A549 (cell line): ENCODE measurements at regions of chr3 and their contacts with region 1.

Region 1: DNA sequence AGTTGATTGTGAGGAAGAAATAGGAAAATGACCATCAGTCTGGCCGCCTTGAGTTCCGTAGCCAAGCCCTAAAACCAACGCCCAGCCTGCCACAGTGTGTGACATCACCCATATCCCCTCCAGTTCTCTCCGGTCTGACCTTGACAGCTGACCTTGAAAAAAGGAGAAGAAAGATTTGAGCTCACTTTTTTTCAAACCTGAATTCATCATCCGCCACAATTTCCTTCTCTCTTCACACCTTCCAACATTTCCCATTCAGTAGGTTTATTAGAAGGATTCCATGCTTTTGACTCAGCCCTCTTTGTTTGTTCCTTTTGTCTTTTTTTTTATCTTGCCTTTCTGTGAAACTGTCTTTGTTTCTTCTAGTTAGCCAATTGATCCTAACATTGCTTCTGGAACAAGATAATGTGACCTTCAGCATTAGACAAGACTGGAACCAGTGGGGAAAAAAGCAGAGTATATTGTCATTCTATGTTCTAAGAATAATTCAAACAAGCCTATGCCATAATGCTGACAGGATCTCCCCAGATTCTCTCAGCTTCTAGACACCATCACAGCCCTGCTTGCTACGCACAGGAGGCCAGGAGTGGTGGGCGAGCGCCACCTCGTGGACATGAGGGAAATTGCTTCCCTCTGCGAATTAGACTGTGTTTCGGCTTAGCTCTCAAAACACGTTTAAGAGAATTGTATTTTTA is 283.1 kb downstream of the FGF12 start:
- DNase-seq: peak; percentile 47 to 53
- ATAC-seq: peak; percentile 83 to 94
- H3K4me3 ChIP-seq: no peak overlapping the region
- H3K27ac ChIP-seq: no peak overlapping the region
- H3K4me1 ChIP-seq: no peaks in the 10 kb centered on the region
- CTCF ChIP-seq: peak; percentile 83
- EP300 ChIP-seq: no peak
- POLR2A ChIP-seq: no peak
- RAD21 ChIP-seq: peak; percentile 92 to 95

Region 2: DNA sequence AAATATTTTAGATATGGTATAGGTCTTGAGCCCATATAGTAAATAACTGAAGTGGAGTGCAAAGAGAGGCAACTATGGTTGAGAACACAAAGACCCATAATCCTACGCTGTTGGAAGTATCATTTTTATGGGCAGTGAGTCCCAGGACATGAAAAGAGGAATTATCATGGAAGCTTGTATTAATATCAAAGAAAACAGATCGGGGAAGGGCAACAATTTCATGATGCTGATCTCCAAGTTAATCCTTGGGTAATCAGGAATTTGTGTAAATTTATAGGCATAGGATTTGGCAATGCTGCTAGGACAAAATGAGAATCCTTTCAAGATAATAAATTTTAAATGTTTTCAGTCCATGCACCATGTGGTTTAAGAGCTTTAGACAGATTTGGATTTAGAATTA is 1023.5 kb before region 1 on chr3:
- CTCF ChIA-PET with region 1: interaction called, 11 read pairs
- POLR2A ChIA-PET with region 1: no interaction called
- DNase-seq: no peak
- ATAC-seq: no peak
- H3K4me3 ChIP-seq: no peak overlapping the region
- H3K27ac ChIP-seq: no peak overlapping the region
- H3K4me1 ChIP-seq: no peaks in the 10 kb centered on the region
- CTCF ChIP-seq: no peak
- EP300 ChIP-seq: no peak
- POLR2A ChIP-seq: no peak
- RAD21 ChIP-seq: no peak

Region 3: DNA sequence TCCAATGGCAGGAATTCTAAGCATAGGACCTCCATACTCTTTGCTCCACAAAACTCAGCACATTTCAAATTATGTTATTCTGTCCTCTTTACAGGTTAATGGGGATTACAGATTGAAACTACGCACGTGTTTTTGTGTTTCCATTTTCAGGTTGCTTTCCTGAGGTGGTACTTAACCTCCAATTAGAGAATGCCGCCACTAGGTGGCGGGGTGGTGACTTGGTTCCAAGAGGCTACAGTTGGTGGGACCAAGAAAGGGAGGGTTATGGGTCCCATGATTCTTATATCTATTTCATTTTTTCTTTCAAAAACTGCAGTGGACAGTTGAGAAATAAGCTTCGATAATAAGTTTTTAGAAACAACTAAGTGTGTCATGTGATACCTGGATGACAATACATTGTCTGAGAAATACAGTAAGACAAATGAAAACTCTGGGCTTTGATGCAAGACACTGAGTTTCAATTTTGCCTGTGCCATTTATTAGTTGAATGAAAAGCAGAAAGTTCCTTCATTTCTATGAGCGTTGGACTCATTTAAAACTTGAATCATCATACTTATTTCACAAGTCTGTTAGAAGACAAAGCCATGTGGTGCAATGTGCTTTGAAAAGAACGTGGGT is 255.9 kb before region 1 on chr3:
- CTCF ChIA-PET with region 1: interaction called, 21 read pairs
- POLR2A ChIA-PET with region 1: no interaction called
- DNase-seq: peak; percentile 21 to 51
- ATAC-seq: peak; percentile 62 to 86; a peak in 5 of 6 replicates
- H3K4me3 ChIP-seq: no peak overlapping the region
- H3K27ac ChIP-seq: no peak overlapping the region
- H3K4me1 ChIP-seq: no peaks in the 10 kb centered on the region
- CTCF ChIP-seq: peak; percentile 57
- EP300 ChIP-seq: no peak
- POLR2A ChIP-seq: no peak
- RAD21 ChIP-seq: peak; percentile 53 to 56; a peak in 4 of 5 replicates

Region 4: DNA sequence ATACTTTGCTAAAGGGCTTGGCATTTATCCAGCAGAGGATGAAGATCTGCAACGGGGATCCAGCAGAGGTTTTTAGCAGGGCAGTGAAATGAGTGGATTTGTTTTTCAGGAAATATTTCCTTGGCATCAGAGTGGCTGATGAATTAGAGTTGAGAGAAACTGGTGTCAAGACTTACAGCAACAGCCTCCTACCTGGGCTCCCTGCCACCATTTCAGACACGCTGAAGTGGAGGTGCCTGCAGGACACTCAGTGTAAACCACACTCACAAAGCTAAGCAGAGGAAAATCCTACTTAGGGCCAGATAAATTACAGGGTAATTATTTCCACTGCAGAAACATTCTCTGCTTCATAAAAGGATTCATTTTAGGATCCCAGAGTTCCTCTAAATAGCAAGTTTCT is 236.6 kb before region 1 on chr3:
- CTCF ChIA-PET with region 1: no interaction called
- POLR2A ChIA-PET with region 1: no interaction called
- DNase-seq: no peak
- ATAC-seq: no peak
- H3K4me3 ChIP-seq: no peak overlapping the region
- H3K27ac ChIP-seq: no peak overlapping the region
- H3K4me1 ChIP-seq: no peaks in the 10 kb centered on the region
- CTCF ChIP-seq: no peak
- EP300 ChIP-seq: no peak
- POLR2A ChIP-seq: no peak
- RAD21 ChIP-seq: no peak

Region 5: DNA sequence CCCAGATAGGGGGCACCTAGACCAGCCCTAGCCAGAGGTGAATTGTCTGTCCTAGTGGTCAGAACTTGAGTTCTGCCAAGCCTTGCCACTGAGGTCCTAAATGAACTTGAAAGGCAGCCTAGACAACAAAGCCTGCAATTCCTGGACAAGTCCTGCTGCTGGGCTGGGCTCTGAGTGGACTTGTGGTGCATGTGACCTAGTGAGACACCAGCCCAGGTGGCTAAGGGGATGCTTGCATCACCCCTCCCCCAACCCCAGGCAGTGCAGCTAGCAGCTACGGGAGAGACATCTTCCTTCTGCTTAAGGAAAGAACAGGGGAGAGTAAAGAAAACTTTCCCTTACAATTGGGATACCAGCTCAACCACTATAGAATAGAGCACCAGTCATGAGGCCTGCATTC is 127.7 kb before region 1 on chr3:
- CTCF ChIA-PET with region 1: no interaction called
- POLR2A ChIA-PET with region 1: no interaction called
- DNase-seq: no peak
- ATAC-seq: no peak
- H3K4me3 ChIP-seq: no peak overlapping the region
- H3K27ac ChIP-seq: no peak overlapping the region
- H3K4me1 ChIP-seq: no peaks in the 10 kb centered on the region
- CTCF ChIP-seq: no peak
- EP300 ChIP-seq: no peak
- POLR2A ChIP-seq: no peak
- RAD21 ChIP-seq: no peak

Region 6: GRCh38 chr3:192409357-192409824 is 34.9 kb before region 1 on chr3:
- CTCF ChIA-PET with region 1: interaction called, 12 read pairs
- POLR2A ChIA-PET with region 1: no interaction called
- DNase-seq: peak; percentile 40 to 43
- ATAC-seq: peak; percentile 67 to 82
- H3K4me3 ChIP-seq: peak overlapping the region; percentile 70
- H3K27ac ChIP-seq: peak overlapping the region; percentile 56 to 95
- H3K4me1 ChIP-seq: peaks cover 10% of the 10 kb centered on the region; the same call in 2 of the 3 replicates
- CTCF ChIP-seq: no peak
- EP300 ChIP-seq: no peak
- POLR2A ChIP-seq: no peak
- RAD21 ChIP-seq: no peak

Region 7: GRCh38 chr3:192423003-192423349 is 21.3 kb before region 1 on chr3:
- CTCF ChIA-PET with region 1: interaction called, 16 read pairs
- POLR2A ChIA-PET with region 1: no interaction called
- DNase-seq: no peak
- ATAC-seq: peak; percentile 19 to 40; a peak in 2 of 6 replicates
- H3K4me3 ChIP-seq: no peak overlapping the region
- H3K27ac ChIP-seq: no peak overlapping the region
- H3K4me1 ChIP-seq: peaks cover 12% of the 10 kb centered on the region
- CTCF ChIP-seq: peak; percentile 28; the same call in 2 of the 3 replicates
- EP300 ChIP-seq: no peak
- POLR2A ChIP-seq: no peak
- RAD21 ChIP-seq: peak in 1 of 2 experiments; percentile 33; a peak in 2 of 5 replicates

Region 8: GRCh38 chr3:192433704-192434103 is 10.5 kb before region 1 on chr3:
- CTCF ChIA-PET with region 1: interaction called, 25 read pairs
- POLR2A ChIA-PET with region 1: no interaction called
- DNase-seq: peak; percentile 33 to 48
- ATAC-seq: peak; percentile 64 to 88; a peak in 5 of 6 replicates
- H3K4me3 ChIP-seq: no peak overlapping the region
- H3K27ac ChIP-seq: peak overlapping the region in 1 of 2 experiments; percentile 51; a peak in 3 of 6 replicates
- H3K4me1 ChIP-seq: peaks cover 15% of the 10 kb centered on the region
- CTCF ChIP-seq: no peak
- EP300 ChIP-seq: no peak
- POLR2A ChIP-seq: no peak
- RAD21 ChIP-seq: no peak